AG04449 (cell line): ENCODE measurements at regions of chr3 and their contacts with region 1.

Region 1: GRCh38 chr3:115040673-115041286 is 106.3 kb downstream of the ZBTB20 start:
- DNase-seq: no peak
- H3K4me3 ChIP-seq: no peak overlapping the region
- CTCF ChIP-seq: peak; percentile 46

Region 2: DNA sequence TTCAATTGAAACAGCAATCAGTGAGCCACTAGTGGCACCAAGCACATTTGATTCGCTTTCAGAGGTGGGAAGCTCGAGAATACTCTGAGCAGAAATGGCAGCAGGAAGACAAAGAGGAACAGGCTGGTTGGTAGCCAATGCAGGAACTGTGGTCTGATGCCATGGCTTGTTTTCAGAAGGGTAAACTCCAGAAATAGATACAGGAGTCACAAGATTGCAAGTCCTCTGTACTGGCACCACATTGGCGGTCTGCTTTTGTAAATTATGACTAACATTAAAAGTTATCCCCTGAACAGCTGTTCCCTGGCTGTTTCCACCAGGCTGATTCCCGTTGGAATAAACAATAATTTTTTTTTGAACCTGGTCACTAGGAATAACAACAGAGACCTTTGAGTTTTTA is 1379.9 kb before region 1 on chr3:
- CTCF ChIA-PET with region 1: no interaction called
- POLR2A ChIA-PET with region 1: no interaction called
- DNase-seq: no peak
- H3K4me3 ChIP-seq: no peak overlapping the region
- CTCF ChIP-seq: no peak

Region 3: GRCh38 chr3:115092220-115092791 is 51.5 kb after region 1 on chr3:
- CTCF ChIA-PET with region 1: interaction called, 36 read pairs
- POLR2A ChIA-PET with region 1: no interaction called
- DNase-seq: no peak
- H3K4me3 ChIP-seq: no peak overlapping the region
- CTCF ChIP-seq: peak; percentile 87

Region 4: GRCh38 chr3:115134648-115135347 is 94.0 kb after region 1 on chr3:
- CTCF ChIA-PET with region 1: no interaction called
- POLR2A ChIA-PET with region 1: no interaction called
- DNase-seq: no peak
- H3K4me3 ChIP-seq: no peak overlapping the region
- CTCF ChIP-seq: no peak

Region 5: GRCh38 chr3:115169808-115170207 is 129.0 kb after region 1 on chr3:
- CTCF ChIA-PET with region 1: interaction called, 15 read pairs
- POLR2A ChIA-PET with region 1: no interaction called
- DNase-seq: no peak
- H3K4me3 ChIP-seq: no peak overlapping the region
- CTCF ChIP-seq: no peak